T-cell (primary cell): ENCODE measurements at regions of chr6 and their contacts with region 1.

Region 1: GRCh38 chr6:53330137-53330536 is 18.6 kb downstream of the ELOVL5 start:
- DNase-seq: no peak
- ATAC-seq: no peak
- H3K4me3 ChIP-seq: no peak overlapping the region
- H3K4me3 Mint-ChIP-seq: no peak overlapping the region
- H3K27ac ChIP-seq: no peak overlapping the region
- H3K27ac Mint-ChIP-seq: no peak overlapping the region
- H3K4me1 ChIP-seq: peaks cover 30 to 53% of the 10 kb centered on the region in 2 experiments
- H3K4me1 Mint-ChIP-seq: peaks cover 82 to 86% (median 83%) of the 10 kb centered on the region in 3 donors
- H3K27me3 ChIP-seq: no peaks in the 10 kb centered on the region
- H3K27me3 Mint-ChIP-seq: no peaks in the 10 kb centered on the region

Region 2: GRCh38 chr6:53128842-53129241 is 201.3 kb before region 1 on chr6:
- CTCF ChIA-PET with region 1: no interaction called
- POLR2A ChIA-PET with region 1: interaction called in 1 of 2 experiments, 13 read pairs
- DNase-seq: no peak
- ATAC-seq: no peak
- H3K4me3 ChIP-seq: no peak overlapping the region
- H3K4me3 Mint-ChIP-seq: no peak overlapping the region
- H3K27ac ChIP-seq: no peak overlapping the region
- H3K27ac Mint-ChIP-seq: no peak overlapping the region
- H3K4me1 ChIP-seq: no peaks in the 10 kb centered on the region
- H3K4me1 Mint-ChIP-seq: no peaks in the 10 kb centered on the region
- H3K27me3 ChIP-seq: peaks cover 0 to 11% of the 10 kb centered on the region in 2 experiments
- H3K27me3 Mint-ChIP-seq: peaks cover 13 to 17% of the 10 kb centered on the region in 2 donors

Region 3: DNA sequence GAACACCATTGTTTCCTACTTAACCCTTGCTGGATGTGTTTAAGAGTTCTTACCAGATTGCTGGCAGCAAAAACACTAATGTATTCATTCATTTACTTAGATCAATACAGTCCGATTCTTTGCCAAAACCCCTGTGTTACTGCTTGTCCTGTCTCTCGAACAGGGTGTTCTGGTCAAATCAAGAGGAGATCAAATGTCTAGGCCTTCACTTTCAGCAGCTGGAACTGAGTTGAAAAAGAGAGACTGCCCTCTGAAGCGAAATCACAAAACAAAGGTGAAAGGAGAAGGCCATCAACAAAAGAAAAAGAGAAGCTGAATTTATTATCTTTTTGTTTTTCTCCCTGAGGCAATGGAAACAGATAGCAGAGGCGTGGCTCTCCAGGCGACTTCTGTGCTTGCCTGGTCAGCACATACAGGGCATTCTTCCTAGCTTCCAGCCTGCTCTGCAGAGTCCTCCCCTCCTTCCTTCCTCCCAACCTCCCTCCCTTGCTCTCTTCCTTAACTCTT is 137.4 kb before region 1 on chr6:
- CTCF ChIA-PET with region 1: interaction called in 1 of 2 experiments, 4 read pairs
- POLR2A ChIA-PET with region 1: interaction called in 1 of 2 experiments, 13 read pairs
- DNase-seq: no peak
- ATAC-seq: no peak
- H3K4me3 ChIP-seq: no peak overlapping the region
- H3K4me3 Mint-ChIP-seq: no peak overlapping the region
- H3K27ac ChIP-seq: no peak overlapping the region
- H3K27ac Mint-ChIP-seq: no peak overlapping the region
- H3K4me1 ChIP-seq: peaks cover 9 to 17% of the 10 kb centered on the region in 2 experiments
- H3K4me1 Mint-ChIP-seq: peaks cover 13 to 31% (median 23%) of the 10 kb centered on the region in 3 donors
- H3K27me3 ChIP-seq: no peaks in the 10 kb centered on the region
- H3K27me3 Mint-ChIP-seq: no peaks in the 10 kb centered on the region

Region 4: DNA sequence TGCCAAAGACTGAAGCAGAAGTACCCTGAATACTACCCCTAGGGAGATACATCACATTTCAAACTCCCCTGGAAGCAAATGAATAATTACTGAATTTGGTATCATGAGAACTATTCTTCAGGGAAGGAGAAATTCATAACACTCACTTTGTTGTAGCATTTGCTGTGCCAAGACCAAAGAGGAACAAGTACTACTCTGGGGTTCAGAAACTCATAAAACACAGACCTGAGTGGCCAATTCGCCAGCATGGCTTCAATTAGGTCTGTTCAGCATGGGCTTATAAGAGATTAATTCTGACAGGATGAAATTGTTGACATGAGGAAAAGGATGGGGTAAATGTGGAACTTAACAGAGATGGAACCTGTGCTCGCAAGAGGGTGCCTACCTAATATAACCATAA is 12.1 kb after region 1 on chr6:
- CTCF ChIA-PET with region 1: interaction called in 1 of 2 experiments, 3 read pairs
- POLR2A ChIA-PET with region 1: interaction called, 3 to 38 read pairs
- DNase-seq: no peak
- ATAC-seq: no peak
- H3K4me3 ChIP-seq: no peak overlapping the region
- H3K4me3 Mint-ChIP-seq: peak overlapping the region in 2 of 3 donors; percentile 8 to 35
- H3K27ac ChIP-seq: no peak overlapping the region
- H3K27ac Mint-ChIP-seq: peak overlapping the region; percentile 78 to 82
- H3K4me1 ChIP-seq: peaks cover 28 to 53% of the 10 kb centered on the region in 2 experiments
- H3K4me1 Mint-ChIP-seq: peaks cover 93 to 96% (median 95%) of the 10 kb centered on the region in 3 donors
- H3K27me3 ChIP-seq: no peaks in the 10 kb centered on the region
- H3K27me3 Mint-ChIP-seq: no peaks in the 10 kb centered on the region